ENCODE measurements at regions of chr6 and their contacts with region 1.

Region 1: GRCh38 chr6:122381497-122382265 is 17.8 kb upstream of the HSF2 start:
- DNase-seq: peak; percentile 65 to 70 (median 68)
- H3K4me3 ChIP-seq: no peak overlapping the region
- H3K4me3 Mint-ChIP-seq: no peak overlapping the region
- H3K27ac ChIP-seq: no peak overlapping the region
- H3K27ac Mint-ChIP-seq: peak overlapping the region in 1 of 7 donors; percentile 48
- H3K4me1 ChIP-seq: no peaks in the 10 kb centered on the region
- H3K4me1 Mint-ChIP-seq: peaks cover under 1 to 4% (median 3%) of the 10 kb centered on the region in 4 donors
- H3K27me3 ChIP-seq: no peaks in the 10 kb centered on the region
- H3K27me3 Mint-ChIP-seq: peaks cover 3% of the 10 kb centered on the region in 2 donors

Region 2: DNA sequence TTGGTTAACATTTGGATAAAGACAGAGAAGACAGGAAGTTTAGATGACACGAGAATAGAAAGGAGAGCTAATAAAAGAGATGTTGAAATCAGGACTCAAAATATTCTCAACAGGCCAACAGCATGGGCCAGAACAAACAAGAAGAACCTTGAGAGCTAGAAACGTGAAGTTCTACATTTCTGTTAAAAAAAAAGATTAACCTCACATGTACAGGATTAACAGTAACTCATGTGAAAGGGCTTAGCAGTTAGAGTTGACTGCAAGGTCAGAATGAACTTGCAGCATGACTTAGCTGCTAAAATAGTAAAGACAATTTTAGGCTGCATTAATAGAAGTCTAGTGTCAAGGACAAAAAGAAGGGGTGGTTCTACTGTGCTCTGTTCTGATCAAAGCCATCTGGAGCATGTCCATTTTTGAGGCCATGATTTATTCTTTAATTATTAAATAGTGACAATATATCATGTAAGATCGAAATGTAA is 313.4 kb before region 1 on chr6:
- CTCF ChIA-PET with region 1: no interaction called
- POLR2A ChIA-PET with region 1: no interaction called
- intact Hi-C with region 1: no loop called
- DNase-seq: no peak
- H3K4me3 ChIP-seq: no peak overlapping the region
- H3K4me3 Mint-ChIP-seq: no peak overlapping the region
- H3K27ac ChIP-seq: no peak overlapping the region
- H3K27ac Mint-ChIP-seq: no peak overlapping the region
- H3K4me1 ChIP-seq: no peaks in the 10 kb centered on the region
- H3K4me1 Mint-ChIP-seq: no peaks in the 10 kb centered on the region
- H3K27me3 ChIP-seq: no peaks in the 10 kb centered on the region
- H3K27me3 Mint-ChIP-seq: no peaks in the 10 kb centered on the region

Region 3: GRCh38 chr6:122399384-122400158 is 17.9 kb after region 1 on chr6 and contains the start of gene HSF2:
- CTCF ChIA-PET with region 1: interaction called, 14 read pairs
- POLR2A ChIA-PET with region 1: no interaction called
- intact Hi-C with region 1: loop called (anchors 1 kb)
- DNase-seq: peak; percentile 92 to 96 (median 94)
- H3K4me3 ChIP-seq: peak within 1 kb of the TSS; percentile 39 to 91
- H3K4me3 Mint-ChIP-seq: peak within 1 kb of the TSS; percentile 96 to 100 (median 98)
- H3K27ac ChIP-seq: peak within 1 kb of the TSS; percentile 88
- H3K27ac Mint-ChIP-seq: peak within 1 kb of the TSS; percentile 92 to 99 (median 97)
- H3K4me1 ChIP-seq: peaks cover 36% of the 10 kb centered on the region
- H3K4me1 Mint-ChIP-seq: peaks cover 27 to 37% (median 31%) of the 10 kb centered on the region in 4 donors
- H3K27me3 ChIP-seq: no peaks in the 10 kb centered on the region
- H3K27me3 Mint-ChIP-seq: no peaks in the 10 kb centered on the region
- total RNA-seq, gene HSF2: 15.7 to 17.4 TPM

Region 4: DNA sequence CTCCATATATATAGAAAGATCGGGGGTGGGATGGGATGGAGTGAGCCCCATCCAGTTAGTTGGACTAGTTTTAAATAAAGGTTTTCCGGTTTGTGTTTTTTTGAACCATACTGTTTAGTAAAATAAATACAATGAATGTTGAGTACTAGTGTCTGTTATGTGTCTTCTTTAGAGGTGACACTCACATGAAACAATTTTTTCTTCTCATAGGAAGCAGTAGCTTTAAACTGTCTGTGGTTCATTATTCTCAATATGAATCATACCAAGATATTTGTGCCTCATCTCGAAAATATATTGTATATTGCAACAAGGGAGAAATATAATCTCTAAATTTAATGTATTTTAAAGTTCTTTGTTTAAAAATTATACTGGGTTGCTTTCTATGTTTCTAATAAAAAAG is 51.1 kb after region 1 on chr6:
- CTCF ChIA-PET with region 1: interaction called, 3 read pairs
- POLR2A ChIA-PET with region 1: no interaction called
- intact Hi-C with region 1: loop called (anchors 5 kb)
- DNase-seq: no peak
- H3K4me3 ChIP-seq: no peak overlapping the region
- H3K4me3 Mint-ChIP-seq: no peak overlapping the region
- H3K27ac ChIP-seq: no peak overlapping the region
- H3K27ac Mint-ChIP-seq: peak overlapping the region in 4 of 7 donors; percentile 18 to 60 (median 36)
- H3K4me1 ChIP-seq: no peaks in the 10 kb centered on the region
- H3K4me1 Mint-ChIP-seq: peaks cover 2 to 8% (median 5%) of the 10 kb centered on the region in 4 donors
- H3K27me3 ChIP-seq: no peaks in the 10 kb centered on the region
- H3K27me3 Mint-ChIP-seq: no peaks in the 10 kb centered on the region

Region 5: GRCh38 chr6:122491919-122492555 is 110.4 kb after region 1 on chr6:
- CTCF ChIA-PET with region 1: interaction called, 8 read pairs
- POLR2A ChIA-PET with region 1: no interaction called
- intact Hi-C with region 1: loop called (anchors 1 kb)
- DNase-seq: peak; percentile 55 to 66 (median 60)
- H3K4me3 ChIP-seq: no peak overlapping the region
- H3K4me3 Mint-ChIP-seq: no peak overlapping the region
- H3K27ac ChIP-seq: no peak overlapping the region
- H3K27ac Mint-ChIP-seq: no peak overlapping the region
- H3K4me1 ChIP-seq: no peaks in the 10 kb centered on the region
- H3K4me1 Mint-ChIP-seq: peaks cover 0 to 6% (median 3%) of the 10 kb centered on the region in 4 donors
- H3K27me3 ChIP-seq: no peaks in the 10 kb centered on the region
- H3K27me3 Mint-ChIP-seq: peaks cover 2% of the 10 kb centered on the region in 2 donors